CD8-positive, alpha-beta memory T cell (primary cell): ENCODE measurements at regions of chr6 and their contacts with region 1.

Region 1: GRCh38 chr6:83067448-83068413 is at the start of gene DOP1A:
- DNase-seq: peak; percentile 91 to 95 (median 93)
- H3K4me3 ChIP-seq: peak within 1 kb of the TSS; percentile 76
- H3K4me3 Mint-ChIP-seq: peak within 1 kb of the TSS; percentile 92 to 99 (median 95)
- H3K27ac ChIP-seq: peak within 1 kb of the TSS; percentile 76
- H3K27ac Mint-ChIP-seq: peak within 1 kb of the TSS; percentile 86 to 99 (median 96)
- H3K4me1 ChIP-seq: peaks cover 21% of the 10 kb centered on the region
- H3K4me1 Mint-ChIP-seq: peaks cover 41 to 75% (median 54%) of the 10 kb centered on the region in 3 donors
- H3K27me3 ChIP-seq: no peaks in the 10 kb centered on the region
- H3K27me3 Mint-ChIP-seq: no peaks in the 10 kb centered on the region
- total RNA-seq, gene DOP1A: 8.5 to 9.7 TPM

Region 2: DNA sequence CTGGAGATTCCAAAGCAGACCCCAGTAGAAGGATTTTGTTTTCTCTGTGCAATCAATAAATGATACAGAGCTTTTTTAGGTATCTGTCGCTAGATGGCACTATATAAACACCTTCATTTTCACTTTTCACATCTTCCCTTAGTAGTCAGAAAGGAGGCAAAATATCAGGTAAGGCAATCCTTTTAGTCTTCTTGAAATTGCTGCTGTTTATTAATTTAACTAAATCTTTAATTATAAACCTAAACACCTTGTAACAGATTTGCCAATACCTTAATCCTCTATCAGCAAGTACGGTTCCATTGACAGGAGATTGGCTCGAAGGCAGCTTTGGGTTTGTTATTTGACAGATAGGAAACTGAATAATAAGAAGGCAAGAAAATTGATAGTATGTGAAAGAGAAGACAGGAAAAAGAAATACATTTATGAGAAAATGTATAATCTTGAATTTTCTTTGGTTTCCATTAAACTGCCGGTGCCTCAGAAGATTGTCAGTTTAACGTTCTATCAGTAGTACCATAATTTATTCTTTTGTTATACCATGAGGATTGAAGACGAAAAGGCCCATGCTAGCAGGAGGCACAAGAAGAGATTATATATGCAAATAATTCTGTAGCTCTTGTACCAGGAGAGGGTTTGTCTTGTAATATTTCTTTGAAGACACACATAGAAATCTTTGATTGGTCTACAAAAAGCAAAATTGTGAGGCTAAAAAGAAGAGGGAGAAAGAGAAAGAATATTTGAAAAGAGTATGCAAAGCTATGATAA is 796.7 kb before region 1 on chr6:
- CTCF ChIA-PET with region 1: interaction called, 44 read pairs
- POLR2A ChIA-PET with region 1: no interaction called
- DNase-seq: peak in 1 of 5 donors; percentile 24
- H3K4me3 ChIP-seq: no peak overlapping the region
- H3K4me3 Mint-ChIP-seq: no peak overlapping the region
- H3K27ac ChIP-seq: no peak overlapping the region
- H3K27ac Mint-ChIP-seq: no peak overlapping the region
- H3K4me1 ChIP-seq: no peaks in the 10 kb centered on the region
- H3K4me1 Mint-ChIP-seq: peaks cover 0 to 2% (median 0%) of the 10 kb centered on the region in 3 donors
- H3K27me3 ChIP-seq: no peaks in the 10 kb centered on the region
- H3K27me3 Mint-ChIP-seq: peaks cover 4% of the 10 kb centered on the region in 2 donors

Region 3: DNA sequence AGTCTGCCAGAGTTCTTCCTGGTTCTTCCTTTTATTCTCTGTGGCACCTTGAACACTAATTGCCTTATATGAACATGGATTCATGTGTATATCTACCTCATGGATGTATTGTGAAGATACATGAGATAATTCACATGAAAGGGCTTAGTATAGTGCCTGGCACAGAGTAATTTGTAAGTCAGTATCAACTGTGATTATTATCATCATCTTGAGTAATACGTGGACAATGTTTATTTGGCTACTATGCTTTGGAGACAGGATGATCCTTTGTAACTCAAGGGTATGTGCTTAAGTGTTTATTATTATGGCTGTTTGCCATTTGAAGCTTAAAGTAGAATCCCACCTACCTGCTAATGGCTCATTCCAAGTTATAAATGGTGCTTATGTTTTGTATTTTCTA is 15.7 kb after region 1 on chr6:
- CTCF ChIA-PET with region 1: interaction called, 41 read pairs
- POLR2A ChIA-PET with region 1: no interaction called
- DNase-seq: no peak
- H3K4me3 ChIP-seq: no peak overlapping the region
- H3K4me3 Mint-ChIP-seq: no peak overlapping the region
- H3K27ac ChIP-seq: no peak overlapping the region
- H3K27ac Mint-ChIP-seq: no peak overlapping the region
- H3K4me1 ChIP-seq: no peaks in the 10 kb centered on the region
- H3K4me1 Mint-ChIP-seq: peaks cover 37 to 67% (median 64%) of the 10 kb centered on the region in 3 donors
- H3K27me3 ChIP-seq: no peaks in the 10 kb centered on the region
- H3K27me3 Mint-ChIP-seq: no peaks in the 10 kb centered on the region

Region 4: GRCh38 chr6:83108378-83108777 is 40.6 kb after region 1 on chr6:
- CTCF ChIA-PET with region 1: interaction called, 10 read pairs
- POLR2A ChIA-PET with region 1: no interaction called
- DNase-seq: no peak
- H3K4me3 ChIP-seq: no peak overlapping the region
- H3K4me3 Mint-ChIP-seq: no peak overlapping the region
- H3K27ac ChIP-seq: no peak overlapping the region
- H3K27ac Mint-ChIP-seq: peak overlapping the region in 2 of 8 donors; percentile 47 to 74
- H3K4me1 ChIP-seq: no peaks in the 10 kb centered on the region
- H3K4me1 Mint-ChIP-seq: no peaks in the 10 kb centered on the region
- H3K27me3 ChIP-seq: no peaks in the 10 kb centered on the region
- H3K27me3 Mint-ChIP-seq: no peaks in the 10 kb centered on the region

Region 5: GRCh38 chr6:83199863-83200225 is 132.1 kb after region 1 on chr6:
- CTCF ChIA-PET with region 1: interaction called, 22 read pairs
- POLR2A ChIA-PET with region 1: interaction called, 4 read pairs
- DNase-seq: no peak
- H3K4me3 ChIP-seq: no peak overlapping the region
- H3K4me3 Mint-ChIP-seq: peak overlapping the region in 1 of 7 donors; percentile 18
- H3K27ac ChIP-seq: no peak overlapping the region
- H3K27ac Mint-ChIP-seq: peak overlapping the region in 1 of 8 donors; percentile 35
- H3K4me1 ChIP-seq: no peaks in the 10 kb centered on the region
- H3K4me1 Mint-ChIP-seq: peaks cover 4 to 11% (median 4%) of the 10 kb centered on the region in 3 donors
- H3K27me3 ChIP-seq: no peaks in the 10 kb centered on the region
- H3K27me3 Mint-ChIP-seq: no peaks in the 10 kb centered on the region

Region 6: GRCh38 chr6:83221889-83222479 is 154.3 kb after region 1 on chr6:
- CTCF ChIA-PET with region 1: interaction called, 88 read pairs
- POLR2A ChIA-PET with region 1: no interaction called
- DNase-seq: peak in 2 of 5 donors; percentile 5 to 11
- H3K4me3 ChIP-seq: no peak overlapping the region
- H3K4me3 Mint-ChIP-seq: no peak overlapping the region
- H3K27ac ChIP-seq: no peak overlapping the region
- H3K27ac Mint-ChIP-seq: no peak overlapping the region
- H3K4me1 ChIP-seq: no peaks in the 10 kb centered on the region
- H3K4me1 Mint-ChIP-seq: peaks cover 0 to 8% (median 1%) of the 10 kb centered on the region in 3 donors
- H3K27me3 ChIP-seq: no peaks in the 10 kb centered on the region
- H3K27me3 Mint-ChIP-seq: no peaks in the 10 kb centered on the region

Region 7: DNA sequence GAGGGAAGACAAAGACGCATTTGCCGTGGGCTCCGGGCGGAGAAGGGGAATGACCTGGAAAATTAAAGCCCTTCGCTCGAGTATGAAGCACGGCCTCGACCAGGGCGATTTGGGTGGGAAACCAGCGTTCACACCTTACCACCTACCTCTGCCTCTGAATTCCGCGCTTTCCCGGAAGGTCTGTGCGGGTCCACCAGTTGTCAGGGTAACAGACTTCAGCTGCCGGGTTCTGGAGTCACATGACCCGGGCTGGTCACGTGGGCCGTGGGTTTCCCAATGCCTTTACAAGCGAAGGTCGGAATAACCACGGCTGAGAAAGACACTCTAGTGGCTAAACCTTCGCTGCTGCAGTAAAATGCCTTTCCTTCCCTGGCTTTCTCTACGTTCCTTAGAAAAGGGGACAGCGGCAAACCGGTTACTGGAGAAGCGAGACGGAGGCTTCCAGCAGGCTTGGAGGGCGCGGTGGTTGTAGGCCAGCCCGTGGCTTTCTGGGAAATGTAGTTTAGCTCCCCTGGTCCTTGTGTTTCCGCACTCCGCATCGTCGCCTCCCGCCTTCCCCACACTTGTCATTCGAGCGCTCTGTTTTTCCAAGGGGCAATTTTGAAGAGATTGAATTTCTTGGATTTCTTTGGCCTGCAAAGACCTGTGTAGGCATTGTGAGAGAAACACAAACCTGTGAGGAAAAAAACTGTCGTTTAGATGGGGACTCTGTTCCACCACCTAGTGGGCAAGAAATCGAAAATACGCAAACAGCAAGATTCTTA is 1159.9 kb after region 1 on chr6 and contains the start of gene CEP162:
- CTCF ChIA-PET with region 1: interaction called, 16 read pairs
- POLR2A ChIA-PET with region 1: no interaction called
- DNase-seq: peak; percentile 85 to 93 (median 88)
- H3K4me3 ChIP-seq: peak within 1 kb of the TSS; percentile 92
- H3K4me3 Mint-ChIP-seq: peak within 1 kb of the TSS; percentile 98 to 100 (median 99)
- H3K27ac ChIP-seq: peak within 1 kb of the TSS; percentile 70
- H3K27ac Mint-ChIP-seq: peak within 1 kb of the TSS; percentile 83 to 99 (median 97)
- H3K4me1 ChIP-seq: peaks cover 15% of the 10 kb centered on the region
- H3K4me1 Mint-ChIP-seq: peaks cover 26 to 39% (median 32%) of the 10 kb centered on the region in 3 donors
- H3K27me3 ChIP-seq: no peaks in the 10 kb centered on the region
- H3K27me3 Mint-ChIP-seq: peaks cover 7% of the 10 kb centered on the region in 2 donors
- total RNA-seq, gene CEP162: 5.5 to 6.0 TPM